ENCODE measurements at regions of chr6 and their contacts with region 1.

Region 1: DNA sequence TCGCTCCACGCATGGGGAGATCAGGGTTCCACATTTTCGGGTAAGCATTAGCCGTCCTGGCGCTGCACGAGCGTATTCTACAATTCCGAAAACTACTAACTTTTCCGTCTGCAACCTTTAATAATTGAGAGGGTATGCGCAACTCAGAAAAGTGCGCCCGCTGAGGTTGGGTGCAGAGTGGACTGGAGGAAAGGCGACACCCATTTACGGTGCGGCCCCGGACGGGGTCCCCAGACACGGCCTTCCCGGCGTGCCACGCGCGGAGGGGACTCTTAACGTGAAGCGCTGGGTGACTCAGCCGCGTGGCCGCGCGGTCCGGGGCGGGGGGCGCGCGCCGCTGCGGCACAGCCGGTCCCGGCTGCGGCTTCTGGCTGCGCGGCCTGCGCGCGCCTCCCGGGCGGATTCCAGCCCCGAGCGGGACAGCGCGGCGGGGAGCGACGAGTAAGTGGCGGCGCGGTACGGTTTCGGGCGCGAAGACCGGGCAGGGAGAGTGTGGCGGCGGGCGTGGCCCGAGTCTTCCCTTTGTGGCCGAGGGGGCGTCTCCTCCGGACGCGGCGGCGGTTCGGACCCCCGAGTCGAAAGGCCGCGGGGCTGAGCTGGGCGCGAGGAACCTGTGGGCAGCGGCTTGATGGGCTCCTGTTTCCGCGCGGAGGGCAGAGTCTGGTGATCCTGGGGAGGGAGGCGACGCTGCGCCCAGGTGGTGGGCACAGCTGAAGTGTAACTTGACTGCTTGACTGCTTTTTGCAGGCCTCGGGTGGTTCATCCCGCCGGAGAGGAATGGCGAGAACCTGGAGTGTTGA is at the starts of genes KCTD20 and PXT1:
- DNase-seq: peak; percentile 80 to 88 (median 84)
- H3K4me3 ChIP-seq: peak within 1 kb of the TSS; percentile 81 to 98 (median 97)
- H3K4me3 Mint-ChIP-seq: peak within 1 kb of the TSS; percentile 98 to 100
- H3K27ac ChIP-seq: peak within 1 kb of the TSS; percentile 91 to 99
- H3K27ac Mint-ChIP-seq: peak within 1 kb of the TSS; percentile 98 to 100 (median 99)
- H3K4me1 ChIP-seq: peaks cover 36 to 40% of the 10 kb centered on the region in 2 donors
- H3K4me1 Mint-ChIP-seq: peaks cover 44% of the 10 kb centered on the region
- H3K27me3 ChIP-seq: no peaks in the 10 kb centered on the region
- H3K27me3 Mint-ChIP-seq: no peaks in the 10 kb centered on the region
- CTCF ChIP-seq: no peak
- polyA plus RNA-seq, gene KCTD20: 23.7 to 79.7 (median 73.9) TPM
- polyA plus RNA-seq, gene PXT1: 0.13 to 0.31 (median 0.24) TPM

Region 2: DNA sequence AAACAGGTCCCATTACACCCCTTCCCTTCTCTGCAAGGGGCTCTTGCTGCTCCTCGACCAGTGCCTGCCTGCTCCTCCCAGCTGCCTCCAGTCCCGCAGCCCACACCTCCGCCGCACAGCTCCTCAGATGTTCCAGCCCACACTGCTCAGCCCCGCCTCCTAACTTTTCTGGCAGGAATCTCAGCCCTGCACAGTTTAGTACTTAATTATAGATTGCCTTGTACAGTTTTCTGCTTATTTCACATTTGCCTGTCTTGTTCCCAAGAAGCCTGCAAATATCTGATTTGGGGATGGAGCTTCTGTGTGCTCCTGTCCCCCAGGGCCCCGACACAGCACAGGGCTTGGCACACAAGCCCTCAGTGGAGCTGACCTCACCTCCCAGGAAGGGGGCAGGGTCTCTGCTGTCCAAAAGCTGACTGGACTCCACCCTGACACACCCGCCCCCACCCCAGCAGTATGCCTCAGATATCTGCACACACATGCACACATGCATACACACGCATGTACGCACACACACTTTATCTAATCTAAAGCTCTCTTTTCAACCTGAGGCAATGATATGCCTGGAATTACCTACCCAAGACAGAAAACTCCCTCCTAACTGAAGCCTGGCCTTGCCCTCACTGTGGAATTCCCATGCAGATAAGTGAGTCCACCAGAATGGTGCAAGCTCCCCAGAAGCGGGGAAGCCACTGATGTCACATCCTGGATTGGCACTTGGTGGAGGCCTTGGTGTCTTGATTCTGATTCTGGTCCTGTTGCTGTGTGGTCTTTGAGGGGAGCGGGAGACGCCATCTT is 174.2 kb before region 1 on chr6:
- intact Hi-C with region 1: no loop called
- DNase-seq: peak in 1 of 3 donors; percentile 48
- H3K4me3 ChIP-seq: no peak overlapping the region
- H3K4me3 Mint-ChIP-seq: no peak overlapping the region
- H3K27ac ChIP-seq: no peak overlapping the region
- H3K27ac Mint-ChIP-seq: peak overlapping the region in 2 of 7 donors; percentile 4 to 6
- H3K4me1 ChIP-seq: peaks cover 3 to 8% of the 10 kb centered on the region in 2 donors
- H3K4me1 Mint-ChIP-seq: peaks cover 11% of the 10 kb centered on the region
- H3K27me3 ChIP-seq: no peaks in the 10 kb centered on the region
- H3K27me3 Mint-ChIP-seq: peaks cover 3 to 6% (median 4%) of the 10 kb centered on the region in 3 donors
- CTCF ChIP-seq: no peak

Region 3: DNA sequence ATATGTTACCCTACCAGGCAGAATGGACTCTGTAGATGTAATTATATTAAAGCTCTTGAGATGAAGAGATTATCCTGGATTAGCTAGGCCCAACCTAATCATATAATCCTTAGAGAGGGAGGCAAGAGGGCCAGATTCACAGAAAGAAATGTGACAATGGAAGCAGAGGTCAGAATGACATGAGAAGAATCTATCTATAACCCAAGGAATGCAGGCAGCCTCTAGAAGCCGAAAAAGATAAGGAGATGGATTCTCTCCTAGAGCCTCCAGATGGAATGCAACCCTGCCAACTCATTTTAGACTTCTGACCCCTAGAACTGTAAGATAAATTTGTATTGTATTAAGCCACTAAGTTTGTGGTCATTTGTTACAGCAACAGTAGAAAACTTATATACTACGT is 12.5 kb before region 1 on chr6:
- intact Hi-C with region 1: loop called in 1 of 2 experiments (anchors 2 kb)
- DNase-seq: no peak
- H3K4me3 ChIP-seq: no peak overlapping the region
- H3K4me3 Mint-ChIP-seq: no peak overlapping the region
- H3K27ac ChIP-seq: no peak overlapping the region
- H3K27ac Mint-ChIP-seq: no peak overlapping the region
- H3K4me1 ChIP-seq: no peaks in the 10 kb centered on the region
- H3K4me1 Mint-ChIP-seq: no peaks in the 10 kb centered on the region
- H3K27me3 ChIP-seq: no peaks in the 10 kb centered on the region
- H3K27me3 Mint-ChIP-seq: peaks cover 3 to 4% (median 3%) of the 10 kb centered on the region in 3 donors
- CTCF ChIP-seq: no peak

Region 4: GRCh38 chr6:36493859-36494258 is 51.0 kb after region 1 on chr6:
- intact Hi-C with region 1: loop called in 1 of 2 experiments (anchors 5 kb)
- DNase-seq: peak; percentile 75 to 88 (median 87)
- H3K4me3 ChIP-seq: peak overlapping the region in 1 of 3 experiments; percentile 65
- H3K4me3 Mint-ChIP-seq: peak overlapping the region; percentile 37 to 64
- H3K27ac ChIP-seq: peak overlapping the region; percentile 88 to 90
- H3K27ac Mint-ChIP-seq: peak overlapping the region; percentile 87 to 97 (median 95)
- H3K4me1 ChIP-seq: peaks cover 45 to 48% of the 10 kb centered on the region in 2 donors
- H3K4me1 Mint-ChIP-seq: peaks cover 48% of the 10 kb centered on the region
- H3K27me3 ChIP-seq: no peaks in the 10 kb centered on the region
- H3K27me3 Mint-ChIP-seq: peaks cover 0 to 3% (median 0%) of the 10 kb centered on the region in 3 donors
- CTCF ChIP-seq: no peak

Region 5: DNA sequence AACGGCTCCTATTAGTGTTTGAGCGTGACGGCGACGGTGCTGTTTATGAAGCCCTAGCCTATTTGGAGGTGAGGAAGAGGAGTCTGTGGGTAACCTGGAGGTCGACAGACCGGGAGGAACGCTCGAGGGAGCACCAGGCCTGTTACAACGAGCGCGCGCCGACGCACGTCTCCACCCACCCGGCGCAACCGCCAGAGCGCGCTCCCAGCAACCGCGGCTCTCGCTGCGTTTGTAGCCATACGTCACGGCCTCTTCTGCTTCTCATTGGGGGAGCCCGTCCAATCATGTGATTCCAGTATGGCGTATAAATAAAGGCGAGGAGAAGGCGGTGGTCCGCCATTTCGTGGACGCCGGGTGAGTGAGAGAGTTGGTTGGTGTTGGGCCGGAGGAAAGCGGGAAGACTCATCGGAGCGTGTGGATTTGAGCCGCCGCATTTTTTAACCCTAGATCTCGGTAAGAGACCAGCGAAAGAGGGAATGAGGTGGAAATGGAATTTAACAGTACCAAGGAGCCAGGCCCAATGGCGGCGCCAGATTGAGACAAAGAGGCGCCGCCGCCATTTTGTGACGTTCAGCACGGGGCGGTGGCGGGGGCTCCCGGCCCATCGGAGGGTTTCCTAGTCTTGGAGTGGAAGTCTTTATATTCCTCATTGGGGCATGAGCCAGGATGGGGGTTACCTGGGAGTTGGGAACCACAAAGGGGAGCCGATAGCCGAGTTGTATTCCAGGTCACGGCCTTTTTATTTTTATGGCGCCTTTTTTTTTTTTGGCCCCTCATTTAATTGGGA is 151.4 kb after region 1 on chr6 and contains the start of gene SRSF3:
- intact Hi-C with region 1: loop called in 1 of 2 experiments (anchors 10 kb)
- DNase-seq: peak; percentile 97 to 98 (median 98)
- H3K4me3 ChIP-seq: peak within 1 kb of the TSS; percentile 96 to 100 (median 99)
- H3K4me3 Mint-ChIP-seq: peak within 1 kb of the TSS; percentile 93 to 94
- H3K27ac ChIP-seq: peak within 1 kb of the TSS; percentile 95 to 96
- H3K27ac Mint-ChIP-seq: peak within 1 kb of the TSS; percentile 99 to 100 (median 100)
- H3K4me1 ChIP-seq: peaks cover 41 to 47% of the 10 kb centered on the region in 2 donors
- H3K4me1 Mint-ChIP-seq: peaks cover 39% of the 10 kb centered on the region
- H3K27me3 ChIP-seq: no peaks in the 10 kb centered on the region
- H3K27me3 Mint-ChIP-seq: peaks cover 0 to 7% (median 2%) of the 10 kb centered on the region in 3 donors
- CTCF ChIP-seq: peak; percentile 48
- polyA plus RNA-seq, gene SRSF3: 293 to 341 (median 297) TPM